ENCODE measurements at regions of chr12 and their contacts with region 1.

Region 1: GRCh38 chr12:95117178-95117599 is 43.8 kb upstream of the NR2C1 start:
- DNase-seq: peak; percentile 64
- CTCF ChIP-seq: peak; percentile 59

Region 2: GRCh38 chr12:94795520-94795919 is 321.7 kb before region 1 on chr12:
- CTCF ChIA-PET with region 1: no interaction called
- POLR2A ChIA-PET with region 1: no interaction called
- DNase-seq: no peak
- CTCF ChIP-seq: no peak

Region 3: GRCh38 chr12:95066091-95066855 is 50.9 kb before region 1 on chr12:
- CTCF ChIA-PET with region 1: no interaction called
- POLR2A ChIA-PET with region 1: no interaction called
- DNase-seq: no peak
- CTCF ChIP-seq: no peak

Region 4: DNA sequence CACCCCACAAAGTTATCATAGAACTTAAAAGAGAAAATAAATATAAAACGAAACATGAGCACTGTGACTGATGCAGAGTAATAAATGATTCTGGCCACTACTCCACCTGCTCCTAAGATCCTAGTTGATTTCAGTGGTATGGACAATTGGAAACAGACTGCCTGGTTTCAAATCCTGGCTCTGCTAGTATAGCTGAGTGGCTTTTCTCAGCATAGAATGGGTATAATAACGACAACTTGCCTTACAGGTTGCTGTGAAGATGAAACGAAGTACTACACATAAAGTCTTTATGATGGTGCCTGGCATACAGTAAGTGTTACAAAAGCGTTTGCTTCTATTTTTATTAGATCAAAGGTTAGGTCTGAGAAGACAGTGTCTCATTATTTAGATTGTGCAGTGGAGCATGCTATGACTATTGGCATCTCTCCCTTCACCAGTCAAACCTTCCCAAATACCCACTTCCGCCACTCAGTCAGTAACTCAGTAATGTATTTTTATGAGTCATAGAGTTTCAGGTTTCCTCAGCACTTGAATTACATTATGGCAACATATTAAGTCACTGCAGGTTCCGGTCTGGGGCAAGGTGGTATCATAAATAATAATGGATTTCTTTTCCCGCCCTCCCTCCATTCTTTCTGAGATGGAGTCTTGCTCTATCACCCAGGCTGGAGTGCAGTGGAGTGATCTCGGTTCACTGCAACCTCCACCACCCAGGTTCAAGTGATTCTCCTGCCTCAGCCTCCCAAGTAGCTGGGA is 14.1 kb before region 1 on chr12:
- CTCF ChIA-PET with region 1: interaction called, 15 read pairs
- POLR2A ChIA-PET with region 1: interaction called, 3 read pairs
- DNase-seq: peak; percentile 68
- CTCF ChIP-seq: no peak

Region 5: DNA sequence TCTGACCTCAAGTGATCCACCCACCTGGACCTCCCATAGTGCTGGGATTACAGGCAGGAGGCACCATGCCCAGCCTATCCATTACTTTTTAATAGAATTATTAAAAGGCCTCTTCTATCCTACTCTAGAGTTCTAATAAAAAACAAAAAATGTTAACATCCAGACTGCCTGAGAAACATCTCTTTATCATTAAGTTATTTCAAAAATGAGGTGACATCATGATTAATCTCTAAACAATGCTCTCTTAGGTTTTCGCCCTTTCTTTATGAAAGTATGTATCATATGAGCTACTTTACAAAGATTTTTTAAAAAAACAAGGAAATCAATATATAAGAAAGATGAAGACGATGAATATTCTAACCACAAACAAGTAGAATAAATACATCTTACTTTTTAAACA is 47.5 kb after region 1 on chr12:
- CTCF ChIA-PET with region 1: interaction called, 11 read pairs
- POLR2A ChIA-PET with region 1: no interaction called
- DNase-seq: no peak
- CTCF ChIP-seq: no peak